PC-3 (cell line): ENCODE measurements at regions of chr1 and their contacts with region 1.

Region 1: GRCh38 chr1:117146570-117147346 is 25.2 kb upstream of the TRIM45 start:
- DNase-seq: peak; percentile 94
- ATAC-seq: peak; percentile 77
- H3K4me3 ChIP-seq: no peak overlapping the region; the same call in 1 of the 2 replicates
- H3K27ac ChIP-seq: peak overlapping the region; percentile 98
- H3K4me1 ChIP-seq: peaks cover 41% of the 10 kb centered on the region
- H3K27me3 ChIP-seq: no peaks in the 10 kb centered on the region
- CTCF ChIP-seq: no peak

Region 2: DNA sequence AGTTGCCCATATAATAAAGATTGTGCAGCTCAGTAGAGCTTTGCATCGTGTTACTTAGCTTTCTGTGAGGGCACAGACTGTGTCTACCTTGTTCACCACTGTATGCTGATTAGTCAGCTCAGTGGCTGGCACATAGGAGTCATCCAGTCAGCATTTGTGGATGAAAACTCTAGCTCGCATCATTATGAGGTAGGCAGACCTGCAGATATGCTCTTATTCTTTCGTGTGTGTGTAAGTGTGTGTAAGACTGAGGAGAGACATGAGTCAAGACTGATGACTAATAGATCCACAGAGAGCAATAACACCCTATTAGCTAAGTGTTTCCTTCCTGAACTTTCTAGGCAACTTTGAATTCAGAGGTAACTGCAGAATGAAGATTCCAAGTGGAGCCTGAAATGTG is 69.5 kb before region 1 on chr1:
- CTCF ChIA-PET with region 1: no interaction called
- POLR2A ChIA-PET with region 1: no interaction called
- intact Hi-C with region 1: no loop called
- DNase-seq: peak; percentile 88
- ATAC-seq: peak; percentile 99
- H3K4me3 ChIP-seq: no peak overlapping the region
- H3K27ac ChIP-seq: peak overlapping the region; percentile 57
- H3K4me1 ChIP-seq: peaks cover 19% of the 10 kb centered on the region
- H3K27me3 ChIP-seq: no peaks in the 10 kb centered on the region
- CTCF ChIP-seq: no peak

Region 3: GRCh38 chr1:117121776-117122697 is 24.7 kb before region 1 on chr1:
- CTCF ChIA-PET with region 1: no interaction called
- POLR2A ChIA-PET with region 1: no interaction called
- intact Hi-C with region 1: loop called (anchors 2 kb)
- DNase-seq: peak; percentile 97
- ATAC-seq: peak; percentile 97
- H3K4me3 ChIP-seq: peak overlapping the region; percentile 71
- H3K27ac ChIP-seq: peak overlapping the region; percentile 58
- H3K4me1 ChIP-seq: peaks cover 15% of the 10 kb centered on the region
- H3K27me3 ChIP-seq: no peaks in the 10 kb centered on the region
- CTCF ChIP-seq: peak; percentile 89

Region 4: GRCh38 chr1:117128323-117129079 is 18.3 kb before region 1 on chr1:
- CTCF ChIA-PET with region 1: interaction called, 4 read pairs
- POLR2A ChIA-PET with region 1: interaction called, 4 read pairs
- intact Hi-C with region 1: loop called (anchors 2 kb)
- DNase-seq: peak; percentile 72
- ATAC-seq: peak; percentile 67
- H3K4me3 ChIP-seq: 0 out of 2 replicates have a peak overlapping the region, but pooled peaks have one; percentile 14
- H3K27ac ChIP-seq: no peak overlapping the region
- H3K4me1 ChIP-seq: peaks cover 10% of the 10 kb centered on the region; the same call in 1 of the 2 replicates
- H3K27me3 ChIP-seq: no peaks in the 10 kb centered on the region
- CTCF ChIP-seq: peak; percentile 78